T-cell (primary cell): ENCODE measurements at regions of chr3 and their contacts with region 1.

Region 1: GRCh38 chr3:129183569-129184395 is at the start of gene CNBP:
- DNase-seq: peak; percentile 81 to 95 (median 90)
- ATAC-seq: peak; percentile 98 to 99 (median 98)
- H3K4me3 ChIP-seq: peak within 1 kb of the TSS; percentile 80 to 96
- H3K4me3 Mint-ChIP-seq: peak within 1 kb of the TSS; percentile 95 to 97 (median 96)
- H3K27ac ChIP-seq: peak within 1 kb of the TSS; percentile 85
- H3K27ac Mint-ChIP-seq: peak within 1 kb of the TSS; percentile 97
- H3K4me1 ChIP-seq: peaks cover 28 to 39% of the 10 kb centered on the region in 2 experiments
- H3K4me1 Mint-ChIP-seq: peaks cover 36 to 44% (median 43%) of the 10 kb centered on the region in 3 donors
- H3K27me3 ChIP-seq: no peaks in the 10 kb centered on the region
- H3K27me3 Mint-ChIP-seq: no peaks in the 10 kb centered on the region
- total RNA-seq, gene CNBP: 280 to 382 (median 356) TPM

Region 2: DNA sequence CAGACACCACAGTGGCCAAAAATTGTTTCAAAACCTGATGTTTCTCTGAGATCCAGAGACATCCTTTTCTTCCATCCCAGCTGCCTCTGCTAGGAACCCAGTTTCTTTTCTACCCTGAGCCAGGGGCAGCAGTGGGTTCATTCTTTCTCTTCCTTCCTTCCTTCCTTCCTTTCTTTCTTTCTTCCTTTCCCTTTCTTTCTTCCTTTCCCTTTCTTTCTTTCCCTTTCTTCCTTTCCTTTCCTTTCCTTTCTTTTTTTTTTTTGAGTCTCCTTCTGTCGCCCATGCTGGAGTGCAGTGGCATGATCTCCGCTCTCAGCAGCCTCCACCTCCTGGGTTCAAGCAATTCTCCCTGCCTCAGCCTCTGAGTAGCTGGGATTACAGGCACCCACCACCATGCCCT is 35.0 kb after region 1 on chr3:
- CTCF ChIA-PET with region 1: no interaction called
- POLR2A ChIA-PET with region 1: no interaction called
- DNase-seq: no peak
- ATAC-seq: no peak
- H3K4me3 ChIP-seq: no peak overlapping the region
- H3K4me3 Mint-ChIP-seq: no peak overlapping the region
- H3K27ac ChIP-seq: no peak overlapping the region
- H3K27ac Mint-ChIP-seq: no peak overlapping the region
- H3K4me1 ChIP-seq: no peaks in the 10 kb centered on the region
- H3K4me1 Mint-ChIP-seq: no peaks in the 10 kb centered on the region
- H3K27me3 ChIP-seq: peaks cover 0 to 4% of the 10 kb centered on the region in 2 experiments
- H3K27me3 Mint-ChIP-seq: no peaks in the 10 kb centered on the region

Region 3: DNA sequence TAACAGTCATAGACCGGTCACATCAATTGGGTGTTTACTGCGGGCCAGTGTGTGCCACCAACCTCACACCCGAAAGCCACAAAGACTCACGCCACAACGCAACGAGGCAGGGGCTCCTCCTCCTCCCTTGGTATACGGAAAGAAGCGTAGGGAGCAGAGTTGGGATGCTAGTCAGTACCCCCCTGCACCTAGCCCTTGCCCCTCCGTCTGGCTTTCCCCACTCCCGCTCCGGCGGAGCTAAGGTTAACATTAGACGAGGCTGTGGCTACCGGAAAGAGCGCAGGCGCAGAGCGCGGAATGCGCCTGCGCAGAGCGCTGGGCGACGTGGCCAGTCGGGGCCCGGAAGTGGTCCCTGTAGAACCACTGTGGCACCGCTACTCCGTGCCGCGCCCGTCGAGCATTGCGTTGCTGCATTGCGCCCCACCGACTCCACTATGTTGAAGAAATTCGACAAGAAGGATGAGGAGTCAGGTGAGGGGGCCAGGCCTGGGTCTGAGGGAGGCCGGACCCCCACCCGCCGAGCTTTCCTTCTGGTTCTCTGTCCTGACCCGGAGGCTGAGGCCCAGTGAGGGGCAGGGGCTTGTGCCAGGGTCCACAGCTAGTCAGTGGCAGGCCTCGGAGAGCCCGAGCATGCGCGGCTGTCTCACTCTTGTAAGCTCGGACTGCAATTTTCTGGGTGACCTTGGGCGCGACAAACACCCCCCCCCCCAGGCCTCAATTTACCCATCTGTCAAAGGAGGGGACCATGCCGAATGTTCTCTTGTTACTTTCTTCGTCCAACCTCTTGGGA is 65.7 kb after region 1 on chr3 and contains the start of gene COPG1:
- CTCF ChIA-PET with region 1: interaction called in 1 of 2 experiments, 10 read pairs
- POLR2A ChIA-PET with region 1: no interaction called
- DNase-seq: peak; percentile 71 to 93 (median 82)
- ATAC-seq: peak; percentile 86 to 91 (median 90)
- H3K4me3 ChIP-seq: peak within 1 kb of the TSS; percentile 65 to 94
- H3K4me3 Mint-ChIP-seq: peak within 1 kb of the TSS; percentile 89 to 93 (median 92)
- H3K27ac ChIP-seq: peak within 1 kb of the TSS; percentile 50
- H3K27ac Mint-ChIP-seq: peak within 1 kb of the TSS; percentile 92 to 95
- H3K4me1 ChIP-seq: peaks cover 9 to 41% of the 10 kb centered on the region in 2 experiments
- H3K4me1 Mint-ChIP-seq: peaks cover 49 to 57% (median 50%) of the 10 kb centered on the region in 3 donors
- H3K27me3 ChIP-seq: no peaks in the 10 kb centered on the region
- H3K27me3 Mint-ChIP-seq: no peaks in the 10 kb centered on the region
- total RNA-seq, gene COPG1: 96.0 to 139 (median 116) TPM